Activated CD4-positive, alpha-beta T cell treated with anti-CD3 and anti-CD28 coated beads for 36 hours (primary cell): ENCODE measurements at regions of chr20 and their contacts with region 1.

Region 1: GRCh38 chr20:49610701-49611538 is 43.0 kb upstream of the PTGIS start:
- DNase-seq: peak; percentile 89
- ATAC-seq: peak; percentile 76
- H3K4me3 Mint-ChIP-seq: no peak overlapping the region
- H3K27ac Mint-ChIP-seq: no peak overlapping the region
- H3K4me1 Mint-ChIP-seq: peaks cover 15% of the 10 kb centered on the region
- H3K27me3 Mint-ChIP-seq: peaks cover 12% of the 10 kb centered on the region

Region 2: GRCh38 chr20:49484180-49485140 is 126.5 kb before region 1 on chr20:
- CTCF ChIA-PET with region 1: no interaction called
- POLR2A ChIA-PET with region 1: no interaction called
- intact Hi-C with region 1: loop called in 1 of 2 experiments (anchors 5 kb)
- DNase-seq: peak; percentile 87
- ATAC-seq: peak; percentile 95
- H3K4me3 Mint-ChIP-seq: peak overlapping the region; percentile 69
- H3K27ac Mint-ChIP-seq: peak overlapping the region; percentile 14
- H3K4me1 Mint-ChIP-seq: peaks cover 6% of the 10 kb centered on the region
- H3K27me3 Mint-ChIP-seq: peaks cover 53% of the 10 kb centered on the region

Region 3: DNA sequence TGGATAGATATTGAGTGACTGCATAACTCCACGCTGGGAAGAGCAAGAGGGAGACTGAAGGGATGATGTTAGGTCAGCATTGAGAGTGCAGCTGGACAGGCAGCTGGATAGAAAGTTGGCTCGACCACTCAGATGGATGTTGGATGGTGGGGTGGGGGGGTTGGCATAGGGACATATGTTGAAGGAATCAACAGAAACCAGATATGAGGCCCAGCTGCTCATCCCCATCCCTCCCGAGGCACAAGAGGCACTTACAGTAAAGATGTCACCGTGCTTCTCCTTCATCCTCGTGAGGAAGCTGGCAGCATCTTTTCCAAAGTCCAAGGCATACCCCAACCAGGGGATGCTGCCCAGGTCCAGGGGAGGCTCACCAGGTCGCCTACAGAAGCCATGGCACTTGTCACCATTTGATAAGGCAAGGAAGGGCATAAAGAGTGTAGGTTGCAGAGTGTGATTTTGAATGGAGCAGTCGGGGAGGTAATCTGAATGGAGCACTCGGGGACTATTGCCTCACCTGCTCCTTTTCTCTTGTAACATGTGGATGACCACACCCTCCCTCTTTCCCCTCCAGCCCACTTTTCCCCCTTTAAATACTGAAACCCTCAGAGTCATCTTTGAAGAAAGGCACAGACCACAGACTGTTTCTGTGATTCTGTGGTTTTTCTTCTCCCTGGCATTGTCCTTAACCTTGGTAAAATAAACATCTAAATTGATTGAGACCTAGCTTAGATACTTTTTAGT is 60.9 kb before region 1 on chr20:
- CTCF ChIA-PET with region 1: interaction called, 26 read pairs
- POLR2A ChIA-PET with region 1: no interaction called
- intact Hi-C with region 1: no loop called
- DNase-seq: no peak
- ATAC-seq: no peak
- H3K4me3 Mint-ChIP-seq: no peak overlapping the region
- H3K27ac Mint-ChIP-seq: no peak overlapping the region
- H3K4me1 Mint-ChIP-seq: peaks cover 12% of the 10 kb centered on the region
- H3K27me3 Mint-ChIP-seq: peaks cover 17% of the 10 kb centered on the region

Region 4: DNA sequence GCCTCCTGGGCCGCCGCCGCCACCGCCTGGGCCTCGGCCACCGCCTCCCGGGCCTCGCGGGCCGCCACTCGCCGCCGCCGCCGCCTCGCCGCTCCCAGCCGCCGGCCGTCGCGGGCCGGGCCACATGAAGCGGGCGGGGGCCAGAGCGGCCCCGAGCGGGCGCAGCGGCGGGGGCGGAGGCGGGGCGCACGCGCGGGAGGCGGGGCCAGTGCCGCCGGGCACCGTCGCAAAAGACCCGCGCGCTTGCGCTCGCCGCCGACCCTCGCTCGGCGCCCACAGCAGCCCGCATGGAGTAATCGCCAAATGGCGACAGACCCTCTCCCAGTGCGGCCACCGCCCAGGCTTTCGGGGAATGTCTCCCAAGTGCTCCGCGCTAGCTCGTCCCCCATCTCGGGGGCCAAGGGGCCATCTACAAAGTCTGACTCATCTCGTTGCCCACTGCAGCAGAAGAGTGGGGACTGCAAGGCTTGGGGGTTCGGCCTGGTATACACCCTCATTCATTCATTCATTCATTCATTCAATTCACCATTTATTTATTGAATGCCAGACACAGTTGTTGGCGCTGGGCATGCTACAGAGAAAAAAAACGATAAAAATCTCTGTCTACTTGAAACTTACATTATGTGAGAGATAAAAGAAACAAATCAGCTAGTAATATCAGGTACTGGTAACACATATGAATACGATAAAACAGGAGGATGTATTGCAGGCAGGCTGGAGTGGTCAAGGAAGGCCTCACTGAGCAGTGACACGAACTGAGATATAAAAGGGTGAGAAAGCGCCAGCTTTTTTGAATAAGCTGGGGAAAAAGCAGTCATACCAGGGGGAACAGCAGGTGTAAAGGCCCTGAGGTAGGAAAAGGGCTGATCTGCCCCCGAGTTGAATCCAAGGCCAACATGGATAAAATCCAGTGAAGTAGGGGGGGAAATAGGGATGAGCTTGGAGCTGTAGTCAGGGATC is 103.1 kb after region 1 on chr20 and contains the start of gene B4GALT5:
- CTCF ChIA-PET with region 1: interaction called, 3 read pairs
- POLR2A ChIA-PET with region 1: no interaction called
- intact Hi-C with region 1: loop called (anchors 2 to 5 kb)
- DNase-seq: peak; percentile 77
- ATAC-seq: peak; percentile 73
- H3K4me3 Mint-ChIP-seq: peak within 1 kb of the TSS; percentile 82
- H3K27ac Mint-ChIP-seq: peak within 1 kb of the TSS; percentile 91
- H3K4me1 Mint-ChIP-seq: peaks cover 49% of the 10 kb centered on the region
- H3K27me3 Mint-ChIP-seq: peaks cover 5% of the 10 kb centered on the region
- total RNA-seq, gene B4GALT5: 18.6 to 19.6 TPM

Region 5: GRCh38 chr20:49888345-49888966 is 277.5 kb after region 1 on chr20:
- CTCF ChIA-PET with region 1: interaction called, 8 read pairs
- POLR2A ChIA-PET with region 1: no interaction called
- intact Hi-C with region 1: loop called (anchors 1 kb)
- DNase-seq: peak; percentile 77
- ATAC-seq: peak; percentile 60
- H3K4me3 Mint-ChIP-seq: no peak overlapping the region
- H3K27ac Mint-ChIP-seq: peak overlapping the region; percentile 51
- H3K4me1 Mint-ChIP-seq: peaks cover 14% of the 10 kb centered on the region
- H3K27me3 Mint-ChIP-seq: no peaks in the 10 kb centered on the region